ENCODE measurements at regions of chr16 and their contacts with region 1.

Region 1: DNA sequence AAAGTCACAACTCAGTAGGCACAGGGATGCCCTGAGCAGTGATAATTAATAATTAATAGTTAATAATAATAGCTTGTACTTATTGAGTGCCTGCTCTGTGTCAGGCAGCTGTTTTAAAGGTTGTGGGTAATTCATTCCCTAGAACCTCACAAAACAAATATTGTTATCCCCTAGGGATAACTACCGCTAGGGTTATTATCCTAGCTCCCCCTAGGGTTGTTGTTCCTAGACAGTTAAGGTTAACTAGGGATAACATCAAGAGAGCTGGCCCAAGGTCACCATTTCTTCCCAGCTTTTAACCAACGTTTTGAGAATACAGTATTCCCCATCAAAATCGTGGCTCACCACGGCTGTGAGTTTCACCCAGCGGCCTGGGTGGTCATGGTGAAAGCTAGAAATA is 180.1 kb downstream of the PRKCB start:
- DNase-seq: no peak
- ATAC-seq: no peak
- H3K4me3 Mint-ChIP-seq: no peak overlapping the region
- H3K27ac Mint-ChIP-seq: no peak overlapping the region
- H3K4me1 Mint-ChIP-seq: peaks cover 38% of the 10 kb centered on the region
- H3K27me3 Mint-ChIP-seq: no peaks in the 10 kb centered on the region

Region 2: DNA sequence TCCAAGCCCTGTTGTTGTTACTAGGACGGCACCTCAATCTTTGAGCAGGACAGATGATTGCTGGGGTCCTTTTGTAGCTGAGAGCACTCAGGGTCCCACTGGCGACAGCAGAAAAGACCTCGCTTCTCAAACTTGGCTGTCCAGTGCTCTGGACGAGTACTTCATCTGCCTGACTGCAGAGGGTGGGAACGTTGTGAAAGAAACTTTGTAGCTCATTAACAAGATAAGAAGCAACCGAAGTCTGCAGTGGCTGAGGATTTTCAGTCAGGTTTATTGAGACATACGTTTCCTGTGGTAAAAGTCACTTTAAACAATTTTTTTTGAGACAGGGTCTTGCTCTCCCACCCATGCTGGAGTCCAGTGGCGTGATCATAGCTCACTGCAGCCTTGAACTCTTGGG is 11.5 kb after region 1 on chr16:
- CTCF ChIA-PET with region 1: interaction called, 10 read pairs
- POLR2A ChIA-PET with region 1: no interaction called
- intact Hi-C with region 1: no loop called
- DNase-seq: no peak
- ATAC-seq: no peak
- H3K4me3 Mint-ChIP-seq: no peak overlapping the region
- H3K27ac Mint-ChIP-seq: no peak overlapping the region
- H3K4me1 Mint-ChIP-seq: no peaks in the 10 kb centered on the region
- H3K27me3 Mint-ChIP-seq: no peaks in the 10 kb centered on the region